B cell (primary cell): ENCODE measurements at regions of chr6 and their contacts with region 1.

Region 1: GRCh38 chr6:12011276-12012076 is 636 bp upstream of the HIVEP1 start:
- DNase-seq: peak; percentile 98
- ATAC-seq: peak; percentile 69
- H3K4me3 ChIP-seq: peak overlapping the region in 4 of 5 experiments; percentile 35 to 96 (median 88)
- H3K4me3 Mint-ChIP-seq: peak overlapping the region; percentile 84
- H3K27ac ChIP-seq: peak overlapping the region in 1 of 2 donors; percentile 96
- H3K27ac Mint-ChIP-seq: peak overlapping the region; percentile 93
- H3K4me1 ChIP-seq: peaks cover 23 to 24% of the 10 kb centered on the region in 2 donors
- H3K4me1 Mint-ChIP-seq: peaks cover 43% of the 10 kb centered on the region
- H3K27me3 ChIP-seq: no peaks in the 10 kb centered on the region
- H3K27me3 Mint-ChIP-seq: no peaks in the 10 kb centered on the region
- CTCF ChIP-seq: no peak

Region 2: DNA sequence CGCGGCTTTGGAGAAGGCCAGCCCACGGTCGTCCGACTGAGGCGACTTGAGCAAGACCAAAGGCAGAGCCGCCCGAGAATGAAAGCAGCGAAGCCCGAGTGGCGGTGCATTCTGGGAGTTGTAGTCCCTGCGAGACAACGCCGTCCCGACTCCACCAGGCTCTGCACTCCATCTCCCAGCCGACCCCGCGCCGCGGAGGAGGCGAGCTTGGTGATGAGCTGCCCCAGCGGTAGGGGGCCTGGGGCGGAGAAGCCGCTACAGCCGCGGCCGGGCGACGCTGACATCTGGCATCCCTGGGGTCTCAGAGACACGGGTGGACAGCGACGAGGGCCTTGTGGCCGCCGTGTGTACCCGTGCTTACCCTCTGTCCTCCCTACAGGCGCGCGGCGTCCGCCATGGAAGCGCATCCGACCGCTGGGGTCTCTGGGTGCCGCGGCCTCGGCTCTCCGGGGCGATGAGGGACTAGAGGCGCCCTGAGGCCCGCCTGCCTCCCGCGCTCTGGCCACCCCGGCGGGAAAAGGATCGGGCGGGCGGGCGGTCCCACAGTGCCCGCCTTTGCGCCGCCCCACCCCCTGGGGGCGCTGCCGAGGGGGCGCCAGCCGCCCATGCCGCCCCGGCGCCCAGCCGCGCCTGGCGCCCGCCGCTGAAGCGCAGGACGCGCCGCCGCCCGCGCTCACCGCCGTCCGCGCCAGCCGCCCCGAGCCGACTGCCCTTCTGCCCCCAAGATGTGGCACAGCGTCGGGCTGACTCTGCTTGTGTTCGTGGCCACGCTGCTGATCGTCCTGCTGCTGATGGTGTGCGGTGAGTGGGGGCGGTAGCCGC is 917.7 kb before region 1 on chr6 and contains the start of gene SMIM13:
- CTCF ChIA-PET with region 1: no interaction called
- POLR2A ChIA-PET with region 1: no interaction called
- intact Hi-C with region 1: loop called (anchors 5 kb)
- DNase-seq: peak; percentile 96
- ATAC-seq: peak; percentile 90
- H3K4me3 ChIP-seq: peak within 1 kb of the TSS; percentile 65 to 95 (median 89)
- H3K4me3 Mint-ChIP-seq: peak within 1 kb of the TSS; percentile 97
- H3K27ac ChIP-seq: peak within 1 kb of the TSS; percentile 91 to 93
- H3K27ac Mint-ChIP-seq: peak within 1 kb of the TSS; percentile 97
- H3K4me1 ChIP-seq: peaks cover 12% of the 10 kb centered on the region in 2 donors
- H3K4me1 Mint-ChIP-seq: peaks cover 22% of the 10 kb centered on the region
- H3K27me3 ChIP-seq: no peaks in the 10 kb centered on the region
- H3K27me3 Mint-ChIP-seq: peaks cover 3% of the 10 kb centered on the region
- CTCF ChIP-seq: peak; percentile 74
- total RNA-seq, gene SMIM13: 5.5 and 7.0 TPM in 2 replicates

Region 3: DNA sequence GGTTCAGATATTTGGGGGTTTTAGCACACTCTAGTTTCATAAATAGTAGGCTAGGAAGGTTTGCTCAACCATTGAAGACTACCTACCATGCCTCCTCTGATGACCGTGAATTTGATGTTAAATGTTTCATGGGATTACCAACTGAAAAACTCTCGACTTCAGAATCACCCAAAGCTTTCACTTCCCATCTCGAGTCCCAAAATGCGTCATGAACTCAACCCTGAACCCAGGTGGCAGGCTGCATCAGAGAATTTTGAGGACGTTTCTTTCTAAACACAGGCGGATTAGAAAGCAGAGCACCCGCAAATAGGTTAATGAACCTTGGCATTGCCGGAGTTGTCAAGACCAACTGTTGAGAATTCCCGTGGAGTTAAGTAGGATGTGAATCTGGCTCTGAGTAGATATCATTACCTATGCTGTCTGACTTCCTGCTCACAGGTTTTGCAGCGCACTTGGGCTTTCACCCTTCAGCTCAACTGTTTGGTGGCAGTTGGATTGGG is 134.5 kb before region 1 on chr6:
- CTCF ChIA-PET with region 1: no interaction called
- POLR2A ChIA-PET with region 1: no interaction called
- intact Hi-C with region 1: loop called (anchors 2 kb)
- DNase-seq: peak; percentile 77
- ATAC-seq: peak; percentile 77
- H3K4me3 ChIP-seq: peak overlapping the region in 3 of 5 experiments; percentile 5 to 33 (median 13)
- H3K4me3 Mint-ChIP-seq: peak overlapping the region; percentile 66
- H3K27ac ChIP-seq: no peak overlapping the region
- H3K27ac Mint-ChIP-seq: peak overlapping the region; percentile 54
- H3K4me1 ChIP-seq: peaks cover 0 to 2% of the 10 kb centered on the region in 2 donors
- H3K4me1 Mint-ChIP-seq: peaks cover 23% of the 10 kb centered on the region
- H3K27me3 ChIP-seq: no peaks in the 10 kb centered on the region
- H3K27me3 Mint-ChIP-seq: peaks cover 12% of the 10 kb centered on the region
- CTCF ChIP-seq: no peak

Region 4: DNA sequence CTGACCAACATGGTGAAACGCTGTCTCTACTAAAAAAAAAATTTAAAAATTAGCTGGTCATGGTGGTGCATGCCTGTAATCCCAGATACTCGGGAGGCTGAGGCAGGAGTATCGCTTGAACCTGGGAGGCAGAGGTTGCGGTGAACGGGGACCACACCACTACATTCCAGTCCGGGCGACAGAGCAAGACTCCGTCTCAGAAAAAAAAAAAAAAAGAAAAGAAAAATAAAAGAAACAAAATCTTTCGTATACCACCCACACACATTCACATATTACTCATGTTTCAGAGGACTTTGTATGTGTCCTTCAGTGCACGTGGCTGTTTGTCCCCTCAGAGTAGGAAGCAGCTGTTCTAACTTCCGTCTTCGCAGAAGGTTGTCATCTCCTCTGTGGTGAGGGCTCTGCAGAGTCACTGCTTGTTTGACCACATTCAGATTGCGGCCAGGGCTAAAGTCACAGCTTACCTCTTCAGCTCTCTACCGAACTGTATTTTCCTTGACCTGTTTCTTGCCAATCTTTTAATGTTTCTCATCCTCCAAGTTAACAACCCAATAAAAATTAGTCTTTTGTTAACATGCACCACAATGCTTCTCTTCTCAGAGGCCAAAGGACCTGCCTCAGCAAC is 36.0 kb before region 1 on chr6:
- CTCF ChIA-PET with region 1: no interaction called
- POLR2A ChIA-PET with region 1: interaction called, 3 read pairs
- intact Hi-C with region 1: loop called (anchors 1 kb)
- DNase-seq: peak; percentile 61
- ATAC-seq: peak; percentile 91
- H3K4me3 ChIP-seq: no peak overlapping the region
- H3K4me3 Mint-ChIP-seq: peak overlapping the region; percentile 33
- H3K27ac ChIP-seq: no peak overlapping the region
- H3K27ac Mint-ChIP-seq: peak overlapping the region; percentile 23
- H3K4me1 ChIP-seq: peaks cover 12 to 18% of the 10 kb centered on the region in 2 donors
- H3K4me1 Mint-ChIP-seq: peaks cover 21% of the 10 kb centered on the region
- H3K27me3 ChIP-seq: no peaks in the 10 kb centered on the region
- H3K27me3 Mint-ChIP-seq: peaks cover 4% of the 10 kb centered on the region
- CTCF ChIP-seq: no peak

Region 5: DNA sequence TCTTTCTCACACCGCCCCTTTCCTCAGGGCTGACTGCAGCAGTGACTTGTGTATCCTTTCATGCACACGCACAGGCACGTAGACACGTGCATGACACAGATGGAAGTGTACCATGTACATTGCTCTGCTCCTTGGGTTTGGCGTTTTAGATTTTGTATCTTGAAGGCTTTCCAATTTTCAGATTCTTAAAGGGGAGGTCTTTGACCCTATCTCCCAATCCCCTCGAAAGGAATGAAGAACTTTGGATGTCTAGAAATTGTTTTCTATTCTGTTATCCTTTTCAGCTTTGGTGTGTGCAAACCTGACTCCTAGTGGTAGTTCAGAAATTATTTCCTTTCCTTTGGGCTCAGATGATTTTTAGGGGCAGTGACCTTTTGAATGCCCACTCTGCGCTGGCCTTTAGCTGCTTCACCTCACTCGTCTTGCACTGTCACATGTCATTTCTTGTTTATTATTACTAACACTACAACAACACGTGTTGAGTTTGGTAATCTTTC is 63.6 kb after region 1 on chr6:
- CTCF ChIA-PET with region 1: interaction called, 21 read pairs
- POLR2A ChIA-PET with region 1: interaction called, 5 read pairs
- intact Hi-C with region 1: loop called (anchors 2 kb)
- DNase-seq: peak; percentile 43
- ATAC-seq: no peak
- H3K4me3 ChIP-seq: no peak overlapping the region
- H3K4me3 Mint-ChIP-seq: no peak overlapping the region
- H3K27ac ChIP-seq: no peak overlapping the region
- H3K27ac Mint-ChIP-seq: no peak overlapping the region
- H3K4me1 ChIP-seq: peaks cover 0 to 6% of the 10 kb centered on the region in 2 donors
- H3K4me1 Mint-ChIP-seq: peaks cover 25% of the 10 kb centered on the region
- H3K27me3 ChIP-seq: no peaks in the 10 kb centered on the region
- H3K27me3 Mint-ChIP-seq: no peaks in the 10 kb centered on the region
- CTCF ChIP-seq: peak; percentile 69